B cell (primary cell): ENCODE measurements at regions of chr14 and their contacts with region 1.

Region 1: GRCh38 chr14:102856179-102856578 is 66.3 kb upstream of the AMN start:
- DNase-seq: no peak
- ATAC-seq: no peak
- H3K4me3 ChIP-seq: no peak overlapping the region
- H3K4me3 Mint-ChIP-seq: no peak overlapping the region
- H3K27ac ChIP-seq: no peak overlapping the region
- H3K27ac Mint-ChIP-seq: no peak overlapping the region
- H3K4me1 ChIP-seq: peaks cover 0 to 5% of the 10 kb centered on the region in 2 donors
- H3K4me1 Mint-ChIP-seq: peaks cover 10% of the 10 kb centered on the region
- H3K27me3 ChIP-seq: no peaks in the 10 kb centered on the region
- H3K27me3 Mint-ChIP-seq: no peaks in the 10 kb centered on the region
- CTCF ChIP-seq: no peak

Region 2: DNA sequence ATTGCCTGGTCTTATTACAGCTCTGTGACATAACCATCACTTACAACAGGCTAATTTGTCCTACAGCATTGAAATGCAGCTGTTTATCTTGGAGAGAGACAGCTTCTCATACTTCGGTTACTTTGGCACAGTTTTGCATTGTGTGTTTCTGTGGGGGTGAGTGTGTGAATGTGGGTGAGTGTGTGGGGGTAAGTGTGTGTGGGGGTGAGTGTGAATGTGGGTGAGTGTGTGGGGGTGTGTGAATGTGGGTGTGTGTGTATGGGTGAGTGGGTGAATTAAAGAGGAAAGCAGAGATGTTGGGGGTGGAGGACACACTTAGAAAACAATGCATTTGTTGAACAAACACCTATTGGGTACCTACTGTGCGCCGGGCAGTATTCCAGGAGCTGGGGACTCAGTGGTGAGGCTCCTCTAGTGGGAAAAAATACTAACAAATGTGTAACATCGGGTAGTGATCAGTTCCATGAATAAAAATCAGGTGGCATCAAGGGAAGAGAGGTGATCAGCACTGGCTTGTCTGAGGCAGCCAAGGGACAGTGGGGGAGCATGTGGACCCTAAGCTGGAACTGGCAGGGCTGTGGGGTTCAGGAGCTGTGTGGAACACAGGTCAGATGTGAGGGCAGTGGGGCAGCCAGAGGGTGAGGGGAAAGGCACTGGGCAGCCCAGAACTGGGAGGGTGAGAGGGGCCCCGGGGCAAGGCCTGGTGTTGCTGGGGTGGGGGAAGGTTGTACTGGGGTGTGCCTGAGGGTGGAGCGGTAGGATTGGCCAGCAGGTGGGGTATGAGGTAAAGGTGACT is 22.2 kb after region 1 on chr14:
- CTCF ChIA-PET with region 1: no interaction called
- POLR2A ChIA-PET with region 1: interaction called, 13 read pairs
- intact Hi-C with region 1: no loop called
- DNase-seq: peak; percentile 35
- ATAC-seq: no peak
- H3K4me3 ChIP-seq: no peak overlapping the region
- H3K4me3 Mint-ChIP-seq: no peak overlapping the region
- H3K27ac ChIP-seq: peak overlapping the region in 1 of 2 donors; percentile 32
- H3K27ac Mint-ChIP-seq: peak overlapping the region; percentile 38
- H3K4me1 ChIP-seq: no peaks in the 10 kb centered on the region
- H3K4me1 Mint-ChIP-seq: no peaks in the 10 kb centered on the region
- H3K27me3 ChIP-seq: no peaks in the 10 kb centered on the region
- H3K27me3 Mint-ChIP-seq: no peaks in the 10 kb centered on the region
- CTCF ChIP-seq: no peak